Activated B cell treated with CpG ODN at 0.5 μM for 24 hours (primary cell): ENCODE measurements at regions of chr10 and their contacts with region 1.

Region 1: GRCh38 chr10:119139464-119140067 is 25.9 kb downstream of the SFXN4 start:
- DNase-seq: peak; percentile 19
- ATAC-seq: peak; percentile 57
- H3K4me3 Mint-ChIP-seq: no peak overlapping the region
- H3K27ac Mint-ChIP-seq: no peak overlapping the region
- H3K4me1 Mint-ChIP-seq: no peaks in the 10 kb centered on the region
- H3K27me3 Mint-ChIP-seq: no peaks in the 10 kb centered on the region
- CTCF ChIP-seq: no peak

Region 2: DNA sequence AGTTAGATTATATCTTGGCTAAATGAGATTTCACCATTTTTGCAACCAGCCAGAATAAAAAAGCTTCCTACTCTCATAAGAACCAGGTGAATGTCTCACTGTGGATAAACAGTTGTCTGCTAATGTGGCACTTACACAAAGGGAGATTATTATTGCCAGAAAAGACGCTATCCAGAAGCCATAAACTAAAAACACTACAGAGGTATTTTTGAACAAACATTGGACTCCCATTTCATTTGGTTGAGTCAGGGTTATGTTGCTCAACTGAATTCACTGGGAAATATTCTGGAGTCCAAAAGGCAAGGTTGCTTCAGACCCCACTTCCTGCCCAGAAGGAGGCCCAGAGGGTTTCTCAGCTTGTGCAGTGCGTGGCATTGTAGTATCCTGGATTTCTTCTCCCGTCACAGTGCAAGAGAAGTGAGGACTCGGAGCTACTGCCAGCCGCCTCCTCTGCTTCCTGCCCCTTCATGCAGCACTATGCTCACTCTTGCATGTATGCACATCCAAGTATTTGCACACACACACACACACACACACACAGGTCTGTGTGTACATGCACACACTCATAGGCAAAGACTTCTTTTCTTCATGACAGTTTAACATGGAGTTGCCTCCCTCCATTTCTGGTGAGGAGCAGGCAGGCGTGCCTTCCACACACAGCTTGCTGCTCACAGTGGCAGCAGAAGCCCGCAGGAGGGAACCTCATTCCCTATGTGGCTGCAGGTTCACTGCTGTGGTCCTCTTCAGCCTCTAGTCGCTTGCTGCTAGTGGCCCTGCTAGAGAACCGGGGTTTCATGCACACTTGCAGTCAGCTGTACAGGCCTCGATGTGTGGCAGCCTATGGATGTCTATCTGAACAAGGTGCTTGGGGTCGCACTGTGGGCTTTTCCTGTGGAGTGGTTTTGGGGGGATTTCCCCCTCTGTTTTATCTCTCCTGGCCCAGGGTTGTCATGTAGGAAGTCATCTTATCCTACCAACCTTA is 25.5 kb before region 1 on chr10:
- CTCF ChIA-PET with region 1: no interaction called
- POLR2A ChIA-PET with region 1: no interaction called
- intact Hi-C with region 1: no loop called
- DNase-seq: no peak
- ATAC-seq: no peak
- H3K4me3 Mint-ChIP-seq: no peak overlapping the region
- H3K27ac Mint-ChIP-seq: no peak overlapping the region
- H3K4me1 Mint-ChIP-seq: no peaks in the 10 kb centered on the region
- H3K27me3 Mint-ChIP-seq: no peaks in the 10 kb centered on the region
- CTCF ChIP-seq: no peak

Region 3: DNA sequence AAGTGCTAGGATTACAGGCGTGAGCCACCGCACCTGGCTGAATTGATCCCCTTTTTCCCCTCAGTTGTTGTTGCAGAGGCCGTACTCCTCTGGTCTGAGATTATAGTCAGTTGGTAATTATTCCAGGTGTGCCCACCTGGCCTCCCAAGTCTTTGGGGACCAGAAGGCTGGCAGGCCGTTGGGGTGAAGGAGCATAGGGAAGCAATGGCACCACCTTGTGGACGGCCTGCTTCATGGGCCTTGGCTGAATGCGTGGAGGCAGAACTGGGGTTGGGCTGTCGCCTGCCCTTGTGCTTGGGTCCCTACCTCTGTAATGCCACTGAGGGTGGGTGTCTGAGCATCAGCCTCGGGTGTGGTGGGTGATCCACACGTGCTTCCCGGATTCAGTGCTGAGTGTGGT is 277.3 kb after region 1 on chr10:
- CTCF ChIA-PET with region 1: no interaction called
- POLR2A ChIA-PET with region 1: no interaction called
- intact Hi-C with region 1: loop called (anchors 5 kb)
- DNase-seq: peak; percentile 57
- ATAC-seq: peak; percentile 92
- H3K4me3 Mint-ChIP-seq: no peak overlapping the region
- H3K27ac Mint-ChIP-seq: no peak overlapping the region
- H3K4me1 Mint-ChIP-seq: peaks cover 2% of the 10 kb centered on the region
- H3K27me3 Mint-ChIP-seq: no peaks in the 10 kb centered on the region
- CTCF ChIP-seq: peak; percentile 22

Region 4: DNA sequence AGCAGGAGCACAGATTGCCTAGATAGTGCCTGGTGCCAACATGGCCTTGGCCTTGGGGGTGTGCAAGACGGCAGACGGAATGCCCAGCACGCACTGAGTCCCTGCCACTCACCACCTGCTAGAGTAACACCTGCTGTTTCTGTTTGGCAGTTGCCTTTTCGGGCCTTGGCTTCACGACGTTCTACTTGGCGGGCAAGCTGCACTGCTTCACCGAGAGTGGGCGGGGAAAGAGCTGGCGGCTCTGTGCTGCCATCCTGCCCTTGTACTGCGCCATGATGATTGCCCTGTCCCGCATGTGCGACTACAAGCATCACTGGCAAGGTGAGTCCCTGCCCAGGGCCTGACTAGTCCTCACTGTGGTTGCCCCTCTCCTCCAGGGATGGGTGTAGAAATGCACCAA is 1435.4 kb after region 1 on chr10:
- CTCF ChIA-PET with region 1: no interaction called
- POLR2A ChIA-PET with region 1: no interaction called
- intact Hi-C with region 1: no loop called
- DNase-seq: no peak
- ATAC-seq: no peak
- H3K4me3 Mint-ChIP-seq: no peak overlapping the region
- H3K27ac Mint-ChIP-seq: no peak overlapping the region
- H3K4me1 Mint-ChIP-seq: no peaks in the 10 kb centered on the region
- H3K27me3 Mint-ChIP-seq: no peaks in the 10 kb centered on the region
- CTCF ChIP-seq: no peak